Sigmoid colon (tissue), 7 donors: ENCODE measurements at regions of chr5 and their contacts with region 1.

Region 1: DNA sequence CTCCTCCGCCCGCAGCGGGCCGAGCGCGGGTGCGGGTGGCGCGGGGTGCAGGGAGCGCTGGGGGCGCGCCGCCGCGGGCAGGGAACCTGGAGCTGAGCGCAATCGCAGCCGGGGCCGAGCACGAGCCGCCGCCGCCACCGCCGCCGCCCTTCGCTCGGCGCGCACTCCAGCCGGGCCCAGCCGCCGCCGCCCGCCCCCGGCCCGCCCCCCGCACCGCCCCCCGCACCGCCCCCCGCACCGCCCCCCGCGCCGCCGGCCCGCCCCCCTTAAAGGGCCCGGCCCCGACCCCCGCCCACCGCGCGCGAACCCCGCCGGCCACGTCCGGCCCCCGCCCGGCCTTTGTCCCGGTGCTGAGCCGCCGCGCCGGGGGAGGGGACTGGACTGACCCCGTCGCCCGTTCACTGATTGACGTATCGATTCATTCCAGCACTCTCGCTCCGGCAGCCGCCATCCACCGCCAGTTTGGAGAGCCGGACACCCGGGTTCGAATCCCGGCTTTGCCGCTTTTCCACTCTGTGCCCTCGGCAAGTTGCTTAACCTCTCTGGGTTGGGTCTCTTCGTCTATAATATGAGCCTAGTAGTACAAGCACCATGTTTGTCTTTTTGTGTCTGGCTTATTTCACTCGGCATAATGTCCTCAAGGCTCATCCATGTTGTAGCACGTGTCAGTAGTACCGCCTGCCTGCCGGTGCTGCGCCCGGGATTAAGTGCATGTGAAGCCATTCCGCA is at the start of gene SH3PXD2B:
- DNase-seq: peak; percentile 86
- H3K4me3 ChIP-seq: peak within 1 kb of the TSS; percentile 84 to 97 (median 90)
- H3K27ac ChIP-seq: peak within 1 kb of the TSS; percentile 85 to 97 (median 95)
- H3K4me1 ChIP-seq: peaks cover 0 to 52% (median 43%) of the 10 kb centered on the region in 4 donors
- H3K27me3 ChIP-seq: no peaks in the 10 kb centered on the region
- CTCF ChIP-seq: no peak
- EP300 ChIP-seq: no peak
- POLR2A ChIP-seq: no peak
- total RNA-seq, gene SH3PXD2B: 19.3 to 45.7 (median 20.9) TPM

Region 2: GRCh38 chr5:172106511-172107356 is 347.8 kb before region 1 on chr5:
- intact Hi-C with region 1: loop called (anchors 10 kb)
- DNase-seq: peak; percentile 78
- H3K4me3 ChIP-seq: peak overlapping the region; percentile 28 to 43 (median 36)
- H3K27ac ChIP-seq: peak overlapping the region; percentile 24 to 70 (median 57)
- H3K4me1 ChIP-seq: peaks cover 0 to 62% (median 53%) of the 10 kb centered on the region in 4 donors
- H3K27me3 ChIP-seq: no peaks in the 10 kb centered on the region
- CTCF ChIP-seq: peak; percentile 62 to 98 (median 90)
- EP300 ChIP-seq: no peak
- POLR2A ChIP-seq: no peak

Region 3: DNA sequence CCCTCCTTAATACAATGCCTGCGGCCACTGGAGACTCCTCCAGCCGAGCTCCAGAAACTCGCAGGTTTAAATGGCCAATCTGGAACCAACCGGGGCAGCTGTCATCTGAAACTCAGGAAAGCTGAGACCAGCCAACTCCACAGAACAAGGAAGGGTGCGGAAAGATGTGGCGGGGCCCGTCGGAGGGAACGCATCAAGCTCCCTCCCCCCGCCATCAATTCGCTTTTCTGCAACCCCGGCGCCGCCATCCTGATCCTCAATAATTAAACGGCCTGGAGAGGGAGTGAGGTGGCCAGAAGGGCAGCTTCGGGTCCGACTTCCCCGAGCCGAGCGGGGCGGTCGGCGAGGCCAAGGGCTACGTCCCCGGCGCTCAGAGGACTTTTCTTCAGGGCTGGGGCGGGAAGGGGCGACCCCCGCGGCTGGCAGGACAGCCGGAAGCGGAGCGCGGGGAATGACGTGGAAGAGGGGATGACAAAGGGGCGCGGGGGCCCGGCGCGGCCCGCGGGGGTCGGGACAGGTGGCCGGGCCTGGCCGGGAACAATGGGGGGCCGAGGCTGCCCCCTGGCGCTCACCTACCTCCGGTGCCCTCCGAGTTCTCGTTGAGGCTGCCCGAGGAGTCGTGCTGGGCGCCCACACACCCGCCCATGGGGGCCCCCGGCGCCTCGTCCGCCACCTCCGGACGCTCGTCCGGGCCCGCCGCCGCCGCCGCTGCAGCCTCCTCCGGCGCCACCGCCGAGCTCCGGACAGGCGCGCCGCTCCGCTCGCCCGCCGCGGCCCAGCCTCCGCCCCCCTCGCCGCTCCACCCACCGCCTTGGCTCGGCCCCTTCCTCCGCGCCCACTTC is 171.3 kb before region 1 on chr5 and contains the start of gene UBTD2:
- intact Hi-C with region 1: loop called (anchors 5 kb)
- DNase-seq: peak; percentile 90
- H3K4me3 ChIP-seq: peak within 1 kb of the TSS; percentile 83 to 99 (median 91)
- H3K27ac ChIP-seq: peak within 1 kb of the TSS; percentile 93 to 96 (median 94)
- H3K4me1 ChIP-seq: peaks cover 0 to 30% (median 21%) of the 10 kb centered on the region in 4 donors
- H3K27me3 ChIP-seq: no peaks in the 10 kb centered on the region
- CTCF ChIP-seq: peak in 2 of 4 experiments; percentile 42 to 49
- EP300 ChIP-seq: no peak
- POLR2A ChIP-seq: peak in 1 of 2 donors; percentile 8
- total RNA-seq, gene UBTD2: 16.3 to 22.1 (median 19.5) TPM

Region 4: DNA sequence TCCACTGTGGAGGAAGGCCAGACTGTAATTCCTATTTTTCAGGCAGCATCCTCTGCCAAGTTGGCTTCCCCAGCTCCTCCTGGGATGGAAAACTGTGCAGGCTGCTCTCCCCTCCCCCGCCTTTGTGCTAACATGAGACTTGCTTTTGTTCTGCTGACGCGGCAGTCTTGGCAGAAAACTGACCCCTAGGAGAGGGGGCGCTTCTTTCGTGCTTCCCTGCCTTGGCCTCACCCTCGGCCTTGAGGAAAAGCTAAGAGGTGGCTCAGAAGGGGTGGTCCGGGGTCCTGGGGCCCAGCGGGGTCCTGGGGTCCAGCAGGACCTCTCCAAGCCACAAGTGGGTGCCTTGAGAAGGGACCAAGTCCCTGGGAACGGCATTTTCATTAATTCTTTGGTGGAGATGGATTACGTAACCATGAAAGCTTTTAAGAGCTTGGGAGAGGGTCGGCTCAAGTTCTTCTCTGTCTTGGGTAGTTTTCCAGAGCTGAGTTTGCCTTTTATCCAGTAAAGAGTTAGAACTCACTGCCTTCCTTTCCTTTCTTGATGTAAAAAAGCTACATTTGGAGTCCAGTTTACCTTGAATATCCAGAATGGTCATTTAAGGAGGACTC is 51.2 kb before region 1 on chr5:
- intact Hi-C with region 1: loop called (anchors 2 kb)
- DNase-seq: peak; percentile 97
- H3K4me3 ChIP-seq: peak overlapping the region in 2 of 4 donors; percentile 2 to 7
- H3K27ac ChIP-seq: peak overlapping the region; percentile 81 to 96 (median 92)
- H3K4me1 ChIP-seq: peaks cover 0 to 57% (median 49%) of the 10 kb centered on the region in 4 donors
- H3K27me3 ChIP-seq: no peaks in the 10 kb centered on the region
- CTCF ChIP-seq: no peak
- EP300 ChIP-seq: peak in 2 of 4 donors; percentile 60 to 94
- POLR2A ChIP-seq: no peak

Region 5: DNA sequence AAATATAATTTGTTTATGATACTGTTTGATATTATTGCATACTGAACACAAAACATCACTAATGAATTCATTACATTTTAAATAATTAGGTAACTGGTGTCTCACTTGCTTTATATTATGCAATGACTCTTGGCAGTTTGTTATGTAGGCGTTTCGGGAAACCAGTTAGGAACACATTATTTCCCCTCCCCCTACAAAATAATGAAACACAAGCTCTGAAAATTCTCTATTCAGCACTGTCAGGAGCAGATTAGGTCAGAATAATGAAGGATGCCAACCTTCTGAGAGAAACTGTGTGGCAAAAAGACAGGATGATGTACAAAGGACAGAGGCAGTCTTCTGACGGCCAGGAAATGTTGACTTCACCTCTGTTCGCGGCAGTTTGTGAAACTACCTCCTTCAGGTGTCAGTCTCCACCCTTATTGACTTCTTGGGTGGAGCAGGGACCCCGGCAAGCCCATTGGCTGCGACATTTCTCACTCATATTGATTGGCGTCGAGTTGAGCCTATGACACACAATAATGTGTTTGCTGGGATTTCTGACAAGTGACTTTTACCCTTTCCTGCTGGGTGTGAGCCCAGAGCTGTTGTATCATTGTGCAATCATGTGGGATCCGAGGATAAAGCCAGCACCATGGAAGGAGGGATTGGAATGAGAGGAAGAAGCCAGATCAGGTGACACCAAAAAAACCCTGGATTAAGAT is 34.1 kb before region 1 on chr5:
- intact Hi-C with region 1: loop called (anchors 2 kb)
- DNase-seq: peak; percentile 93
- H3K4me3 ChIP-seq: no peak overlapping the region
- H3K27ac ChIP-seq: peak overlapping the region; percentile 89 to 96 (median 91)
- H3K4me1 ChIP-seq: peaks cover 0 to 75% (median 70%) of the 10 kb centered on the region in 4 donors
- H3K27me3 ChIP-seq: no peaks in the 10 kb centered on the region
- CTCF ChIP-seq: no peak
- EP300 ChIP-seq: peak in 1 of 4 donors; percentile 21
- POLR2A ChIP-seq: no peak

Region 6: DNA sequence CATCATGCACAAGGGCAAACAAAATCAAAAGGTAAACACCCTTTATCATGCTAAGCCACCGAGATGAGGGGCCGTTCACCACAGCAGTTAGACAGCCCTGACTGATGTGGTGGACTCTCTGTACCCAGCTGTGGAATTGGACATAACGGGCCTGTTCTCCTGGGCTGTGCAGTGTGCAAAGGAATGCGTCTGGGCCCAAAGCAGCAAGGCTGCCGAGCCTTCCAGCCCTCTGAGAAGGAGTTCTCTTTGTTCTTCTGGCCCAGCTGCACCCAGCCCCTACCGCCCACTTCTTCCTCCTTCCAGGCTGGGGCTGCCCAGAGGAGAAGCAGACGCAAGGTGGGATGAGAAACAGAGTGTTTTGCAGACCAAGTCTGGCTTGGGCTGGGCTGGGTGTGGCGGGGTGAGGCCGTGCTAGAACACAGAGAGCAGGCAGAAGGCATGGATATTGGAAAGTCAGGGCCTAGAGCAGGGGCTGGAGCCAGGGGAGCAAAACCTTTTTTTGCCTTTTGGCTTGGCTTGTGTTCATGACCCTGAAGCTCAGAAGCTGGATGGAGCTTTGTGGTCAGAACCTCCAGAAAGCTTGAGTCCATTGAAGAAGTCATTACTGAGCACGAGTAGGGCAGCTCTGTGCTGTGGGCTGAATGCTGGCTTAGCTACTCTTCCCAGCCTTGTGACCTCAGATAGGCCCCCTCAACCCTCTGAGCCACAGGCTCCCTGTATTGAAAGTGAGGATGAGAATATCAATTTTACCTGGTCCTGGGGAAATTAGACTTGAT is 49.6 kb after region 1 on chr5:
- intact Hi-C with region 1: no loop called
- DNase-seq: peak; percentile 80
- H3K4me3 ChIP-seq: no peak overlapping the region
- H3K27ac ChIP-seq: peak overlapping the region; percentile 48 to 68 (median 55)
- H3K4me1 ChIP-seq: peaks cover 0 to 18% (median 5%) of the 10 kb centered on the region in 4 donors
- H3K27me3 ChIP-seq: no peaks in the 10 kb centered on the region
- CTCF ChIP-seq: no peak
- EP300 ChIP-seq: no peak
- POLR2A ChIP-seq: no peak